Activated naive CD4-positive, alpha-beta T cell treated with anti-CD3 and anti-CD28 coated beads, Interleukin-2, amount 10 ng/mL, durations not matched to agents 7 days and 5 days (primary cell): ENCODE measurements at regions of chr15 and their contacts with region 1.

Region 1: DNA sequence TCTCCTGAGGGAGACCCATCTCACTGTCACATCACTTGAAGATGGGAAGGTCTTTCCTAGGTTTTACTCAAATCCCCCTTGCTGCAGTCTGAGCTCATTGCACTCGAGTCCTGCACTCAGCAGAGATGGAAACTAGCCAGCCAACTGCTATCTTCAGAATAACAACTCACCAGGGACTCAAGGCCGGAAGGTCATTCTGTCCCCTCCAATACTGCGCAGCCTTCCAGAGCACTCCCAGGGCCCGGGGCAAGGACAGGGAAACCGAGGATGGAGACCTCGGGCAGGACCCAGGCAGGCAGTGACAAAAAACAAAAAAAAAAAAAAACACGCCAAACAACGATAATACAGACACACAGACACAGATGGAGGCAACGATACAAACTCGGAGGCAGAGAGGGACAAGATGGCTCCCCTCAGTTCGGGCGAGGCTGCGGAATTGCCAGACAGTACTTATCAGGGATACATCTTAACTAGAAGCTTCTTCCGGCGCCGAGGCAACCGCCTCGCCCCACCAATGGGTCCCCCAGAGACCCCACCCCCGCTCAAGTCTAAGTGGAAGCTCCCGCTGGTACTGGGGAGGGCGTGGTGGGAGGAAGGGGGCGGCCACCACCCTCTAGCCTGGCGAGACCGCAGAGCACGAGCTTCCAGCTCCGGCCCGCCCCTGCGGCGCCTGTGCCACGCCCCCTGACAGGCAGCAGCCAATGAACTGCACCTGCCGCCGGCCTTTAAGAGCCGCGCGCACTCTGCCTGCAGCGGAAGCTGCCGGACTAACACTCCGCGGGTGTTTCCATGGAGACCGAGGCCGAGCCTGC is 7.0 kb upstream of the MAP1A start:
- DNase-seq: peak; percentile 98
- H3K4me3 Mint-ChIP-seq: peak overlapping the region; percentile 91
- H3K27ac Mint-ChIP-seq: peak overlapping the region; percentile 96
- H3K4me1 Mint-ChIP-seq: peaks cover 62% of the 10 kb centered on the region
- H3K27me3 Mint-ChIP-seq: peaks cover 9% of the 10 kb centered on the region

Region 2: DNA sequence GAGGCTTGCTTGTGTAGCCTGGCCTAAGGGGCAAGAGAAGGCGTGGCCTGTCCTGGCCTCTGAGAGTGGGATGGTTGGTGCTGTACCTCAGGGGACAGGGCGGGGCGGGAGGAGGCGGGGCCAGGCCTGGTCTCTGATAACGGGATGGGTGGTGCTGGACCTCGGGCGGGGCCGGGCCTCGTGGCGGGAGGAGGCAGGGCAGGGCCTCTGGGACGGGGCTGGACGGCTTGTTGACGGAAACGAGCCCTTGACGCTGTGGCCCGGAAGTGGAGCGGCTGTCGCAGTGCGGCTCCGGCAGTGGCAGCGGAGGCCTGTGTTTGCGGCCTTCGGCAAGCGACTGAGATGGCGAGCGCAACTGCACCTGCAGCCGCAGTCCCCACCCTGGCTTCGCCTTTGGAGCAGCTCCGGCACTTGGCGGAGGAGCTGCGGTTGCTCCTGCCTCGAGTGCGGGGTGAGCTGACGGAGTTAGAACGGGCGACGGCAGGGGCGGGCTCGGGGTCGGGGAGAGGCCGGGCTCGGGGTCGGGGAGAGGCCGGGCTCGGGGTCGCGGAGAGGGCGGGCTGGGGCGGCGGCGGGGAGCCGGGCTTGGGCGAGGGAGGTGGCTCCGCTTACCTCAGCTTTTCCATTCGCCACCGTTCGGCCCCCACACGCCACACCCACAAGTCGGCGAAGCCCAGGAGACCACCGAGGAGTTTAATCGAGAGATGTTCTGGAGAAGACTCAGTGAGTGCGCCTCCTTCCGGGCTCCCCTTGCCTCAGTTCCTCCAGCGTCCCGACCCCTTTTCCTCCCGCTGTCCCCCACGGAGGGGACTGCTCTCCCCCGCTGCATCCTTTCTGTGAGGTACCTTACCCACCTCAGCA is 325.0 kb before region 1 on chr15 and contains the start of gene CCNDBP1:
- CTCF ChIA-PET with region 1: no interaction called
- DNase-seq: peak; percentile 94
- H3K4me3 Mint-ChIP-seq: peak within 1 kb of the TSS; percentile 97
- H3K27ac Mint-ChIP-seq: peak within 1 kb of the TSS; percentile 96
- H3K4me1 Mint-ChIP-seq: peaks cover 42% of the 10 kb centered on the region
- H3K27me3 Mint-ChIP-seq: no peaks in the 10 kb centered on the region

Region 3: DNA sequence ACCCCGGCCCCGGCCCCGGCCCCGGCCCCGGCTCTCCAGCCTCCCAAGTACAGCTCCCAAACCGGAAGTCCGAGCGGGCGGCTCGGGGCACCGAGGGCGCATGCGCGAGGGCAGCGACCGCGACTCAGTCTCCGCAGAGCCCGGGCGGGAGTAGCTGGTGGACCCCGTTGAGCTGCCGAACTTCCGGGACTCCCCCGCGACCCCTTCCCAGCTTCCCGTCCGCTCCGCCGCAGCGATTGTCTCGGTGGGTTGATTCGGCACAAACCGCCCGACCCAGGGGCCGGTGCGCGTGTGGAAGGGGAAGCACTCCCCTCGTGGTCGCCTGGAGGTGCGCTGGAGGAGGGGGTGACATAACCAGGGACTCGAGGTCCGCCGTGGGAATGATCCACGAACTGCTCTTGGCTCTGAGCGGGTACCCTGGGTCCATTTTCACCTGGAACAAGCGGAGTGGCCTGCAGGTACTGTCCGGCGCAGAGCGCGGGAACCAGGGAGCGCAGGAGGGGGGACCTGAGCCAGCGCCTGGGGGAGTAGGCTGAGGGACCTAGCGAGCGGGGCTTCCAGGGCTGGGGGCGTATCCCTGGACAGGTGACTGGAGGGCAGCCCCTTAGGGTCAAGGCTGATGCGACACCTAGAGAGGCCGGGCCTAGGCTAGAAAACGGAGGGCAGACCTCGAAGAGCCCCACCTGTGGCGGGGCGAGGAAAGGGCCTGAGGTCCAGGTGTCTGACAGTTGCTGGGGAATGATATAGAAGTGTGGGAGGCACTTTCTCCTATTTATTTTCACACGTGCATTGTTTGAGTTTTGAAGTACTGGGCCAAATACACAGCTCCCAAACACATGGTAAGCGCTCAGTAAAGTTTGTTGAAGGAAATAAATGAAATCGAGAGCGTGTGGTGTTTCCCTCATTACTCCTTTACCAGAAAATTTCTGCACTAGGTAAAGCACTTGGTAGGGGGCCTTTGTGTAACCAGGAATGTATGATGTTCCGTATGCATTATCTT is 139.1 kb before region 1 on chr15 and contains the starts of genes TUBGCP4 and ZSCAN29:
- CTCF ChIA-PET with region 1: interaction called, 10 read pairs
- DNase-seq: peak; percentile 85
- H3K4me3 Mint-ChIP-seq: peak within 1 kb of the TSS; percentile 84
- H3K27ac Mint-ChIP-seq: peak within 1 kb of the TSS; percentile 76
- H3K4me1 Mint-ChIP-seq: peaks cover 59% of the 10 kb centered on the region
- H3K27me3 Mint-ChIP-seq: no peaks in the 10 kb centered on the region

Region 4: GRCh38 chr15:43440721-43441281 is 69.6 kb before region 1 on chr15:
- CTCF ChIA-PET with region 1: interaction called, 43 read pairs
- DNase-seq: peak; percentile 39
- H3K4me3 Mint-ChIP-seq: no peak overlapping the region
- H3K27ac Mint-ChIP-seq: peak overlapping the region; percentile 78
- H3K4me1 Mint-ChIP-seq: peaks cover 7% of the 10 kb centered on the region
- H3K27me3 Mint-ChIP-seq: no peaks in the 10 kb centered on the region